HepG2 (cell line): ENCODE measurements at regions of chr3 and their contacts with region 1.

Region 1: DNA sequence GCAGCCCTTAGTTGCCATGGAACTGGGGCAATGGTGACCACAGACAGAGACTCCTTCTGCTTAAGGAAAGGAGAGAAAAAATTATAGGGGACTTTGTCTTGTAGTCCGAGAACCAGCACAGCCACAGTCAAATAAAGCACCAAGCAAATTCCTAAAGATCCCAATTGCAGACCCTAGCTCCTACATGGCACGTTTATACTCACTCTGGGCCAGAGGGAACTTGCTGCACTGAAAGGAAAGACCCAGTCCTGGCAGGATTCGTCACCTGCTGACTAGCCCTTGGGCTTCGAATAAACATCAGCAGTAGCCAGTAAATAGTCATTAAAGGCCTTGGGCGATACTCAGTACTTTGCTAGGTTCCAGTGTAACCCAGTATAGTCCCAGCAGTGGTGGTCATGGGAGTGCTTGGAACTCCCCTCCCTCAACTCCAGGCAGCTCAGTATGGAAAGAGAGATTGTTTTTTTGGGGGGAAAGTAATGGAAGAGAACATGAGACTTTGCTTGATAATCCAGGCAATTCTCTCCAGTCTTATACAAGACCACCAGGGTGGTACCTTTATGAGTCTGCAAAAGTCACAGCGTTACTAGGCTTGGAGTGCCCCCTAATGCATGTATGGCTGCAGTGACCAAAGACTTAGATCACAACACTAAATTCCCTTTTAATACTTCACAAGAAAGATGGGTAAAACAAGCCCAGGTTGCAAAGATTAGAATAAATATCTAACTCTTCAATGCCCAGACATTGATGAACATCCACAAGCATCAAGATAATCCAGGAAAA is 66.4 kb upstream of the AGTR1 start:
- DNase-seq: peak; percentile 61
- ATAC-seq: peak; percentile 91
- H3K4me3 ChIP-seq: no peak overlapping the region
- H3K27ac ChIP-seq: peak overlapping the region; percentile 35
- H3K4me1 ChIP-seq: peaks cover 11% of the 10 kb centered on the region
- H3K27me3 ChIP-seq: no peaks in the 10 kb centered on the region
- CTCF ChIP-seq: peak; percentile 80
- EP300 ChIP-seq: no peak
- POLR2A ChIP-seq: no peak
- RAD21 ChIP-seq: peak; percentile 88

Region 2: DNA sequence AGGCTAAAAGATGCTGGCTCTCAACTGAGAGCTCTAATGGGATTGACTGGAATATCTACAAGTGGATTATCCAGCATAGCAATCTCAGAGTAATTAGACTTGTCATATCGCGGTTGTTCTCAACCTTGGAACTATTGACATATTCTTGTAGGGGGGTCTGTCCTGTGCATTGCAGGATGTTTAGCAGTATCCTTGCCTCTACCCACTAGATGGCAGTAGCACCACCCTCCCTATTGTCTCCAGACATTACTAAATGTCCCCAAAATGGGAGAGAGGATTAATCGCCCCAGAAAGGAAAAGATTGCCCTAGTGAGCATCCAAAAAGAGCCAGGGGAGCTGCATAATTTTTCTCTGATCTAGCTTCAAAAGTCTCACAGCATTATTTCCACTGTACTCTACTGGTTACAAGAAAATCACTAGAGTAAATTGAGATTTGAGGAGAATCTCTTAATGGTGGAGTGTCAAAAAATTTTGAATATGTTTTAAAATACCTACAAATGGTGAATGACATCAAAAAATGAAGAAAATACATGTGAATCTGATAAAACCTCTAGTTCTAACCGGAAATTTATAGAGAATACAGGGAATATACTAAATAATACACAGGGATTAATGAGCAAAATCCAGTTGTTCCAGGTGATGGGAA is 321.8 kb before region 1 on chr3:
- CTCF ChIA-PET with region 1: interaction called, 6 read pairs
- POLR2A ChIA-PET with region 1: no interaction called
- in situ Hi-C with region 1: no loop called
- intact Hi-C with region 1: loop called (anchors 1 kb)
- DNase-seq: peak; percentile 46
- ATAC-seq: peak; percentile 92
- H3K4me3 ChIP-seq: no peak overlapping the region
- H3K27ac ChIP-seq: no peak overlapping the region
- H3K4me1 ChIP-seq: no peaks in the 10 kb centered on the region
- H3K27me3 ChIP-seq: no peaks in the 10 kb centered on the region
- CTCF ChIP-seq: peak; percentile 64
- EP300 ChIP-seq: no peak
- POLR2A ChIP-seq: no peak
- RAD21 ChIP-seq: peak; percentile 35; the same call in 1 of the 2 replicates

Region 3: DNA sequence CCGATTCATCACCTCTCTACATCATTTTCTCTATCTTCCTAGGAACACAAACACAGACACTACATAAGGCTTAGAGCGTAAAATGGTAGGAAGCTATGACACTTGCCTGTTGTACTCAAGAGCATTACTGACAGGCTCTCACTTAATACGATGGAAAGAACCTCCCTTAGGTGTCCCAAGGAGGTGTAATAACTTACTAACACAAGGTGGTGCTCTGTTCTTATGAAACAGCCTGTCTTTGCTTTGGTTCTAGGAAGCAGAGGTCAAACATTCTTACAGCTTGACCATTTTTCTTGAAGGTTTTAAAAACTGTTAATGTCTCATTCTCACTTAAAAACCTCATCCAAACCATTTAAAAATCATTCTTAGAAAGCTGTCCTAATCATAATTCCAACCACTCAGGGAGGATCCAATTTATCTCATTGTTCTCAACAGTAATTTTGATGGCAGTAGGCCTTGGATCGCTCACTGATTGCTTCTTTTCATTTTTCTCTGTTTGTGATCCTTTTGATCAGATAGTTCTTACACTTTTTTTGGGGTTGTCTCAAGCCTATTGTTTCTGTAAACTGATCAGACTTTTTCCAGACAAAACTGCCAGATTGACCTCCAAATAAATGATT is 251.4 kb before region 1 on chr3:
- CTCF ChIA-PET with region 1: interaction called, 22 read pairs
- POLR2A ChIA-PET with region 1: no interaction called
- in situ Hi-C with region 1: loop called (anchors 5 kb)
- intact Hi-C with region 1: loop called (anchors 1 kb)
- DNase-seq: peak; percentile 71
- ATAC-seq: peak; percentile 98
- H3K4me3 ChIP-seq: no peak overlapping the region
- H3K27ac ChIP-seq: no peak overlapping the region
- H3K4me1 ChIP-seq: no peaks in the 10 kb centered on the region
- H3K27me3 ChIP-seq: no peaks in the 10 kb centered on the region
- CTCF ChIP-seq: peak; percentile 86
- EP300 ChIP-seq: peak in 1 of 2 experiments; percentile 15; a peak in 1 of 4 replicates
- POLR2A ChIP-seq: no peak
- RAD21 ChIP-seq: peak; percentile 73

Region 4: DNA sequence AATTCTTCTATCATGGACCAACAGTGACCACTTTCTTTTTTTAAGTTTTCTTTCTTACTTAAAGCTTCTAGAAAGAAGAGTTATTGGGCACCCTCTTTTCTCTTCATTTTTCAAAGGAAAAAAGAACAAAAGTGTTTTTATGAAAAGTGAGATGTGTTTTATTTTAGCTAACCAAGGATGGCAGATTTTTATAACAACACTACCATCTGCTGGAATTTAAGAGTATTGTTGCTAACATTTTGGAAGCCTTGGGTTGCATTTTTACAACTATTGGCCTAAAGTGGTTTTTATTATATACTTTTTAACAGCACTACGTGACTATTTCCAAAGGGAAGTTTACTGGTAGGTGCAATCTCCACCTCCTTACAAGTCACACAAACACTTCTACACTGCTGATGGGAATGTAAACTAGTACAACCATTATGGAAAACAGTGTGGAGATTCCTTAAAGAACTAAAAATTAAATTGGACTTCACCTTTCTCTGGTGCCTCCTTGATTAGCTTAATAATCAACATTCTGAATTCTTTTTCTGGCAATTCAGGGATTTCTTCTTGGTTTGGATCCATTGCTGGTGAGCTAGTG is 171.3 kb before region 1 on chr3:
- CTCF ChIA-PET with region 1: no interaction called
- POLR2A ChIA-PET with region 1: no interaction called
- in situ Hi-C with region 1: no loop called
- intact Hi-C with region 1: loop called (anchors 5 kb)
- DNase-seq: no peak
- ATAC-seq: no peak
- H3K4me3 ChIP-seq: no peak overlapping the region
- H3K27ac ChIP-seq: no peak overlapping the region
- H3K4me1 ChIP-seq: peaks cover 28% of the 10 kb centered on the region
- H3K27me3 ChIP-seq: peaks cover 0 to 1% of the 10 kb centered on the region in 2 experiments; a peak in 1 of 5 replicates
- CTCF ChIP-seq: peak; percentile 49; the same call in 1 of the 2 replicates
- EP300 ChIP-seq: no peak
- POLR2A ChIP-seq: no peak
- RAD21 ChIP-seq: peak; percentile 48; the same call in 1 of the 2 replicates

Region 5: DNA sequence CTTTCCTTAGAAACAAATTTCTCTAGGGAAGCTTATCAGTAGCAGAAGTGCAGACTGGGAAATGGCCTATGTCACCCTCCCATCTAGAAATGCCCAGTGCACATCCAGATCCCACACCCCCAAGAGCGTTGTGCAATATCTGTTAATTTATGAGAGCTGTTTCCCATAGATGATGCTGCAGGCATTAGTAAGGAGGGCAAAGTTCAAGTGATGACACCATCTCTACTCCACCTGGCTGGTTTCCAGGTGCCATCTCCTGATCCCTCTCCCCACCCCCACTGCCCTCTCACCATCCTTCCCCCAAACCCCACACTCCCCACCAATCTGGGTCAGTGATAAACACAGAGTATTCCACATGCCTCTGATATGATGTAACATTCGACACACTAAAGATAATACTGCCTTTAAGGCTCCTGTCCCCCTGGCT is 105.8 kb after region 1 on chr3:
- CTCF ChIA-PET with region 1: no interaction called
- POLR2A ChIA-PET with region 1: no interaction called
- in situ Hi-C with region 1: no loop called
- intact Hi-C with region 1: no loop called
- DNase-seq: peak; percentile 12
- ATAC-seq: peak; percentile 28; the same call in 2 of the 3 replicates
- H3K4me3 ChIP-seq: no peak overlapping the region
- H3K27ac ChIP-seq: no peak overlapping the region
- H3K4me1 ChIP-seq: no peaks in the 10 kb centered on the region
- H3K27me3 ChIP-seq: no peaks in the 10 kb centered on the region
- CTCF ChIP-seq: no peak
- EP300 ChIP-seq: peak in 1 of 2 experiments; percentile 10; a peak in 1 of 4 replicates
- POLR2A ChIP-seq: no peak
- RAD21 ChIP-seq: no peak